Breast epithelium (tissue), 4 donors: ENCODE measurements at regions of chr5 and their contacts with region 1.

Region 1: DNA sequence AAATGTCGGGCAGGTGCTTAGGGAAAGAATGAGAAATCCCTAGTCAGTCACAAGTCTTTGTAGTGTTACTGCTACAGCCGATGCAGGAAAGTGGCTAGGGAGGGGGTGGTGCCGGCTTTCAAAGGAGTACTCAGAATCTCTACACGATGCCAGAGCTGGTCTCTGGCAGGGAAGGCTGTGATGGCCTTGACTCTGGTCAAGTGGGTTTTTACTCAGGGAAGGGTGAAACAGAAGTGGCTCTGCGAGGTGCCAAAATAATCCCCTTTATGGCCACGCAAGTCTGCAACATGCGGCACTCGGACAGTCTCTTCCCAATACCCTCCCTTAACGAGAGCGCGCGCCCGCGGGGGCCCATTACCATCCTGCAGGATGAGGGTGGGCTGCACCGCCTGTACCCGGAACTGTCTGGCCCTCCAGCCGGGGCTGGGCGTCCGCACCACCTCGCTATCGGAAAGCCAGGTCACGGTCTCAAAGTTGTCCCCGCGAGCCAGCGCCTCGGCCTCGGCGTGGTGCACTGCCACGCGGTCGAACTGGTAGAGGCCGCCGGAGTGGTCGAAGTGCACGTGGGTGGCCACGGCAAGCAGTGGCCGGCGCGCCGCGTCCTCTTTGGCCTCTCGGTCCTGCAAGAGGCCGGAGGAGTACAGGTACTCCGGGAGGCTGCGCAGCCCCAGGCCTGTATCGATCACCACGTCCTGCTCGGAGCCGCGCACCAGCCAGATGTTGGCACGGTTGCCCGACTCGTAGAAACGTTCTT is 913 bp downstream of the MBLAC2 start:
- DNase-seq: no peak
- H3K4me3 ChIP-seq: peak overlapping the region; percentile 60 to 86 (median 71)
- H3K27ac ChIP-seq: peak overlapping the region; percentile 51 to 70
- H3K4me1 ChIP-seq: no peaks in the 10 kb centered on the region
- H3K27me3 ChIP-seq: no peaks in the 10 kb centered on the region
- CTCF ChIP-seq: no peak
- POLR2A ChIP-seq: no peak

Region 2: DNA sequence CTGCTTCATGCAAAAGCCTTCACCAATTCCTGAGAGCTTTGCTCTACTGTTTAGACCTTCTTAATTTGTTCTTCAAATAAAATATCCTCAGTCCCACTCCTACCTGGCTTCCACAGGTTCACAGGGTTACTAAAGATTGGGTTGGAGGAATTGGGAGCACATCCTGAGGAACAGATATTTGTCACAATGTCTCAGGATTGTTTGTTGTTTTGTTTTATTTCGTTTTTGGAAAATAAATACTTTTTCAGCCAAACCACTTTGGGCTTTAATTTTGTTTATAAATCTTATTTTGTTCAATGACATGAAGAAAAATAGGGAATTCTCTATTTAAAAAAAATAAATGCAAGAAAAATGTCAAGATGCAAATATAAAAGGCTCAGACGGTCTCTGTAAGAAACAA is 1839.6 kb before region 1 on chr5:
- intact Hi-C with region 1: no loop called
- DNase-seq: no peak
- H3K4me3 ChIP-seq: no peak overlapping the region
- H3K27ac ChIP-seq: no peak overlapping the region
- H3K4me1 ChIP-seq: no peaks in the 10 kb centered on the region
- H3K27me3 ChIP-seq: peaks cover 0 to 4% of the 10 kb centered on the region in 2 donors
- CTCF ChIP-seq: no peak
- POLR2A ChIP-seq: no peak

Region 3: GRCh38 chr5:90193185-90193822 is 280.4 kb before region 1 on chr5:
- intact Hi-C with region 1: no loop called
- DNase-seq: no peak
- H3K4me3 ChIP-seq: no peak overlapping the region
- H3K27ac ChIP-seq: no peak overlapping the region
- H3K4me1 ChIP-seq: no peaks in the 10 kb centered on the region
- H3K27me3 ChIP-seq: no peaks in the 10 kb centered on the region
- CTCF ChIP-seq: no peak
- POLR2A ChIP-seq: no peak

Region 4: DNA sequence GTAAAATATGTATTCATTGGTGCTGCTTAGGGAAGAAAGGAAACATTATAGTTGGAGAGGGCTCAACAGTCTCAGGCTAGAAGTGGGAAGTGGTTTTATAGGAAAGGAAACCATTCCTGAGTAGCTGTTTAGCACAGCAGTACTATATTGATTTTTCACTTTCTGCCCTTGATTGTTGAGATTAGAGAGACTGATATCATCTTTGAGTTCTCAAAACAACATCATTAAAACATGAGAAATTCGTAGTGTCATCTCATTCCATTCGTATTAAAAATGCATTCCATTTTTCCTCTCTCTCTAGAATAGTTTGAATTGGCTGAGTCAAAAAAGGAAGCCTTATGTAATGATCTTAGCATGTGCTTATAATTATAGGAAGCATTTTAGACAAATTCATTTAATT is 15.1 kb after region 1 on chr5:
- intact Hi-C with region 1: no loop called
- DNase-seq: no peak
- H3K4me3 ChIP-seq: no peak overlapping the region
- H3K27ac ChIP-seq: no peak overlapping the region
- H3K4me1 ChIP-seq: no peaks in the 10 kb centered on the region
- H3K27me3 ChIP-seq: no peaks in the 10 kb centered on the region
- CTCF ChIP-seq: no peak
- POLR2A ChIP-seq: no peak

Region 5: GRCh38 chr5:90514520-90514919 is 40.9 kb after region 1 on chr5:
- intact Hi-C with region 1: loop called (anchors 1 kb)
- DNase-seq: no peak
- H3K4me3 ChIP-seq: no peak overlapping the region
- H3K27ac ChIP-seq: no peak overlapping the region
- H3K4me1 ChIP-seq: no peaks in the 10 kb centered on the region
- H3K27me3 ChIP-seq: no peaks in the 10 kb centered on the region
- CTCF ChIP-seq: no peak
- POLR2A ChIP-seq: no peak

Region 6: DNA sequence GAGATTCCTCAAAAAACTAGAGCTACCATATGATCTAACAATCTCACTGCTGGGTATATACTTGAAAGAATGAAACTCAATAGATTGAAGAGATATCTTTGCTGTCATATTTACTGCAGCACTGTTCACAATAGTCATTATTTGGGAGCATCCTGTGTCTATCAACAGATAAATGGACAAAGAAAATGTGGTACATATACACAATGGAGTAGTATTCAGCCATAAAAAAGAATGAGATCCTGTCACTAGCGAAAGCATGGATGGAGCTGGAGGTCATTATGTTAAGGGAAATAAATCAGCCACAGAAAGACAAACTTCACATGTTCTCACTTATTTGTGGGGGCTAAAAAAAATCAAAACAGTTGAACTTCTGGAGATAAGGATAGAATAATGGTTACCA is 1415.2 kb after region 1 on chr5:
- intact Hi-C with region 1: no loop called
- DNase-seq: no peak
- H3K4me3 ChIP-seq: no peak overlapping the region
- H3K27ac ChIP-seq: no peak overlapping the region
- H3K4me1 ChIP-seq: no peaks in the 10 kb centered on the region
- H3K27me3 ChIP-seq: no peaks in the 10 kb centered on the region
- CTCF ChIP-seq: no peak
- POLR2A ChIP-seq: no peak